ENCODE measurements at regions of chr6 and their contacts with region 1.

Region 1: GRCh38 chr6:122530440-122531046 is 58.9 kb upstream of the SERINC1 start:
- DNase-seq: peak; percentile 67
- H3K4me3 Mint-ChIP-seq: no peak overlapping the region
- H3K27ac Mint-ChIP-seq: no peak overlapping the region
- H3K4me1 Mint-ChIP-seq: no peaks in the 10 kb centered on the region
- H3K27me3 Mint-ChIP-seq: peaks cover 22% of the 10 kb centered on the region

Region 2: GRCh38 chr6:121430514-121431460 is 1099.8 kb before region 1 on chr6:
- CTCF ChIA-PET with region 1: no interaction called
- intact Hi-C with region 1: loop called (anchors 1 kb)
- DNase-seq: no peak
- H3K4me3 Mint-ChIP-seq: no peak overlapping the region
- H3K27ac Mint-ChIP-seq: no peak overlapping the region
- H3K4me1 Mint-ChIP-seq: peaks cover 3% of the 10 kb centered on the region
- H3K27me3 Mint-ChIP-seq: no peaks in the 10 kb centered on the region

Region 3: DNA sequence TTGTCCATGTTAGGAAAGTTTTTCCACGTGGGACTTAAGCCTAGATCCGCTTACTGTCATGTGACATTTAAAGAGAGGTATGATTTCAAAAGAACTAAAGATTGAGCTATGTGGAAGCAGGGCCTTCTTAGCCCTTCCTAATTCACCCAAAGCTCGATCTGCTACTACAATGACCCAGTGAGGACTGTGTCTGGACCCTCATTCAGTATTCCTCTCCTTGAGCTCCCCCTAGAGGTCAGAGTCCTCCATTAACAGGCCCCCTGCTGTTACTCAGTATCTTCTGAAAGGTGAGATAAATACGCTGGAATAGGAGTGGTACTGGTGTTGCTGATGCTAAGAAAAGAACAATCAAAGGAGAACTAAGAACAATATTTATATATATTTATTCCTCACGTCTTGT is 681.1 kb before region 1 on chr6:
- CTCF ChIA-PET with region 1: no interaction called
- intact Hi-C with region 1: loop called (anchors 10 kb)
- DNase-seq: peak; percentile 54
- H3K4me3 Mint-ChIP-seq: no peak overlapping the region
- H3K27ac Mint-ChIP-seq: no peak overlapping the region
- H3K4me1 Mint-ChIP-seq: peaks cover 7% of the 10 kb centered on the region
- H3K27me3 Mint-ChIP-seq: peaks cover 5% of the 10 kb centered on the region

Region 4: DNA sequence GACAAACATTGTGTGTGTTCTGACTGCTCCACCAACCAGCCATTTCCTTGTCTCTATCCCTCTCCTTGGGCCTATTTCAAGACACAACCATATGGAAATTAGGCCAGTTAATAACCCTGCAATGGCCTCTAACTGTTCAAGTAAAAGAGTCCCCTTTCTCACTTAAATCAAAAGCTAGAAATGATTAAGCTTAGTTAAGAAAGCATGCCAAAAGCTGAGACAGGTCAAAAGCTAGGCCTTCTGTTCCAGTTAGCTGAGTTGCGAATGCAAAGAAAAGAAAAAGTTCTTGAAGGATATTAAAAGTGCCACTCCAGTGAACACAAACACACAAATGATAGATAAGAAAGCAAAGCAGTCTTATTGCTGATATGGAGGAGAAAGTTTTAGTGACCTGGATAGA is 81.5 kb before region 1 on chr6:
- CTCF ChIA-PET with region 1: no interaction called
- intact Hi-C with region 1: no loop called
- DNase-seq: no peak
- H3K4me3 Mint-ChIP-seq: no peak overlapping the region
- H3K27ac Mint-ChIP-seq: peak overlapping the region; percentile 33
- H3K4me1 Mint-ChIP-seq: peaks cover 25% of the 10 kb centered on the region
- H3K27me3 Mint-ChIP-seq: no peaks in the 10 kb centered on the region

Region 5: GRCh38 chr6:122491919-122492555 is 38.5 kb before region 1 on chr6:
- CTCF ChIA-PET with region 1: interaction called, 123 read pairs
- intact Hi-C with region 1: loop called (anchors 1 kb)
- DNase-seq: peak; percentile 87
- H3K4me3 Mint-ChIP-seq: no peak overlapping the region
- H3K27ac Mint-ChIP-seq: no peak overlapping the region
- H3K4me1 Mint-ChIP-seq: peaks cover 10% of the 10 kb centered on the region
- H3K27me3 Mint-ChIP-seq: no peaks in the 10 kb centered on the region

Region 6: GRCh38 chr6:122511193-122511924 is 19.2 kb before region 1 on chr6:
- CTCF ChIA-PET with region 1: interaction called, 13 read pairs
- intact Hi-C with region 1: no loop called
- DNase-seq: no peak
- H3K4me3 Mint-ChIP-seq: no peak overlapping the region
- H3K27ac Mint-ChIP-seq: no peak overlapping the region
- H3K4me1 Mint-ChIP-seq: no peaks in the 10 kb centered on the region
- H3K27me3 Mint-ChIP-seq: peaks cover 2% of the 10 kb centered on the region

Region 7: GRCh38 chr6:122520179-122520578 is 10.4 kb before region 1 on chr6:
- CTCF ChIA-PET with region 1: interaction called, 13 read pairs
- intact Hi-C with region 1: no loop called
- DNase-seq: no peak
- H3K4me3 Mint-ChIP-seq: no peak overlapping the region
- H3K27ac Mint-ChIP-seq: no peak overlapping the region
- H3K4me1 Mint-ChIP-seq: no peaks in the 10 kb centered on the region
- H3K27me3 Mint-ChIP-seq: peaks cover 7% of the 10 kb centered on the region

Region 8: DNA sequence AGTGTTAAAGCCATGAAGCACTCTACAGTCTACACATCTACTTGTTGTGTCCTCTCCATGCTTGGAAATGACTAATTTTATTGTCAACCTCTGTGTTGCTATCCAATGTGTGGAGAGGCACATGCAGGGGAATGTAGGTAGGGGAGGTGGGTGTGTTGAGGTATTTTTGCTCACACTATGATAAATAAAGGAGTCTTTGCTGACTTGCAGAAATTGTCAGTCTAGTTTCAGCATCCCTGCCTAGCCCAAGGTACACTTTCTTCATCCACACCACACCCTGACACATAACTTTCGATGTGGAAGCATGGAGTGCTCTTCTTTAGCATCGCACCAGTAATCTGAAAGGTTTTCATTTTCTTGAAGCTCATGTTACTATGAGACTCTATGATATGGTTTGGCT is 842.2 kb after region 1 on chr6:
- CTCF ChIA-PET with region 1: no interaction called
- intact Hi-C with region 1: no loop called
- DNase-seq: no peak
- H3K4me3 Mint-ChIP-seq: no peak overlapping the region
- H3K27ac Mint-ChIP-seq: no peak overlapping the region
- H3K4me1 Mint-ChIP-seq: no peaks in the 10 kb centered on the region
- H3K27me3 Mint-ChIP-seq: no peaks in the 10 kb centered on the region